OCI-LY7 (cell line): ENCODE measurements at regions of chr3 and their contacts with region 1.

Region 1: GRCh38 chr3:17195856-17196604 is 311.3 kb downstream of the PLCL2 start:
- DNase-seq: peak; percentile 86
- H3K4me3 ChIP-seq: peak overlapping the region; percentile 45
- H3K27ac ChIP-seq: peak overlapping the region; percentile 89
- H3K4me1 ChIP-seq: peaks cover 58% of the 10 kb centered on the region
- CTCF ChIP-seq: peak; percentile 81

Region 2: DNA sequence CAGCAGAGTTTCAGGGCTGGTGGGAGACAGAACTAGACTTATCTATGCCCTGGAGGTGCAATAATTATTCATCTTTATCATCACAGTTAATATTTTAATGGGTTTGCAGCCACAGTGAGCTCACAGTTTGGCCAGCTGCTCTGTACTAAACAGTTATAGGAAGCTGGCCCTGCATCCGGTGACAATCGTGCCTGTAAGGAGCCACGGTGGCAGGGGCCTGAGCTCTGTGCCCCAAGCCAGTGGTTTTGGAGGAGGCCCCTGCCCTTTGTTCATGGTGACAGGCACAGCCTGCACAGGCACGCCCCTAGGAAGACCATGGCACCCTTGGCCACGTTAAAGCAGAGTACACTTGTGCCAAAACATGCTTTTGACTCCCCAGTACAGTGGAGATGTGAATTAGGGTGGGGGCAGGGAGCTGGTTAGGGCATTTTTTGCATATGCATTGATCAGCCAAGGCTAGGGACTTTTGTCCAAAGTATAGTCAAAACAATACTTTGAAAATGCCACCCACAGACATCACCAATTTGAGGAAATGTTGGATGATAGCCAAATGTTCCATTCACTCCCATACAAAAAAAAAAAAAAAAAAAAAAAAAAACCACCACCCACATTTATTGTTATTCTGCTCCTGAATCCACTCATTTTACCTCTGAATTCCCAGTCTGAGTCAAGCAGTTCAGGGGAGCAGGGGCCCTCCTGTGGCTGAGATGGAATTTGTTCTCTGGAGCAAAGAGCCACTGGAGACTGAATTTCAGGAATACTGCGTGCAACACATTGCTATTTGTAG is 679.1 kb before region 1 on chr3:
- CTCF ChIA-PET with region 1: no interaction called
- POLR2A ChIA-PET with region 1: no interaction called
- intact Hi-C with region 1: no loop called
- DNase-seq: no peak
- H3K4me3 ChIP-seq: peak overlapping the region; percentile 92
- H3K27ac ChIP-seq: peak overlapping the region; percentile 24
- H3K4me1 ChIP-seq: peaks cover 50% of the 10 kb centered on the region
- CTCF ChIP-seq: peak; percentile 55

Region 3: GRCh38 chr3:16884084-16884747 is 311.8 kb before region 1 on chr3:
- CTCF ChIA-PET with region 1: no interaction called
- POLR2A ChIA-PET with region 1: interaction called, 4 read pairs
- intact Hi-C with region 1: loop called (anchors 1 kb)
- DNase-seq: peak; percentile 83
- H3K4me3 ChIP-seq: peak overlapping the region; percentile 76
- H3K27ac ChIP-seq: peak overlapping the region; percentile 79
- H3K4me1 ChIP-seq: peaks cover 22% of the 10 kb centered on the region
- CTCF ChIP-seq: peak; percentile 77

Region 4: DNA sequence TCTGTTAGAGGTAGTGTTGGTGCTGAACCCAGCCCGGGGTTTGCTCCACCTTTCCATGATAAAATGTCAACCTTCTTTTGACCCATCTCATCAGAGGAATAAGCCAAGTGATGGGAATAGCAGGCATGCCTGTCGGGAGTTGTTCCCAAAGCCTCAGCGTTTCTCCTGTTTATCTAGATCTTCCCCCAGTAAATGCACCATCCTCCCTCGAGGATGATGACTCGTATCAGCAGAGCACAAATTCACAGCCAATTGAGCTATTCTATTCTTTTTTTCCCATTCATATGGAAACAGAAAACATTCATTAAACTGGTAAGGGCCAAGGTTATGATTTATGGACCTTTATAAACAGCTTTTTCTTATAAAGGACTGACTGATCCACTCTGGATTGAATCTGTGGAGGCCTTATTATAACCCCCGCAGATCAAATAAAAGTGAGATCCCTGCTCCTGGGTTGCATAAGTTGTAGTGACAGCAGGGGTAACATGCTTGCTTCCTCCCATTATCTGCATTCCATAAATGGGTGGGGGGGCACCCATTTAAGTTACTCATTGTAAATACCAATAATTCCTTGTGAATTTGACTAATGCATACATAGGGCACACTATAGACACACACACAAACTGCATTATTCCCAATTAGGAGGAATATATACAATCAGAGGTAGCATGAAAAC is 104.0 kb before region 1 on chr3:
- CTCF ChIA-PET with region 1: no interaction called
- POLR2A ChIA-PET with region 1: no interaction called
- intact Hi-C with region 1: no loop called
- DNase-seq: no peak
- H3K4me3 ChIP-seq: no peak overlapping the region
- H3K27ac ChIP-seq: no peak overlapping the region
- H3K4me1 ChIP-seq: no peaks in the 10 kb centered on the region
- CTCF ChIP-seq: no peak

Region 5: DNA sequence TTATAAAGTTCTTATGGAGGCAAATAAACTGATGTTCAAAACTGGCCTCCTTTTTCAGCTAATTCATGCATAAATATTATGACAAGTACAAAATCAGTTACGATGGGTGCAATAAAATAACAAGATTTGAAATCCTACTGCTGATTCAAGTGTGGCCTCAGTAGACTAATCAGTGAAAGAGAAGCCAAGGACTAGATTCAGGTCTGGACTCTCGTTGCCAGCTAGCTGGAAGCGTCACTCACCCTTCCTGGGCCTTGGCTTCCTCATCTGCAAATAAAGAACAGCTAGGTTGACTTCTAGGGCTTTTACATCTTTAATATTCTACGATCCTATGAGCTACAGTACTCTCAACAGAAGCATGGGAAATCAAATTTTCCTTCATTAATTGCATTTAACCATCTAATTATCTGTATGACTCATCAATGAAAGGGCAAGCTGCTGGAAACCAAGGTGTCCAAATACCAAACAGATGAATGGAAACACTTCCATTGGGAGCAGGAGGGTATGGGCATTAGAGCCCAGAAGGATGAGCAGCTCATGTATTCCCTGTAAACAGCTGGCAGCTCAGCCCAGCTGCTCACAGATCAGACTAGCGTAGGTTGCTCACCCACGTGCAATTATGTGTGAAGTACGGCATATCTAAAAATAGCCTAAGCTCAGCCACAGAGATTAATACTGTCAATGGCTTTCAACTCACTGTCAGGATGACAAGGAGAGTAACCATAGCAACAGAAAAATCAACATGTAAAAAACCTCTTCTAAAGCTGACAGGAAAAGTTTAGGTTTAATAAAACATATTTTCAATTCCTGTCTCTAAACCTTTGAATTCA is 16.4 kb before region 1 on chr3:
- CTCF ChIA-PET with region 1: interaction called, 5 read pairs
- POLR2A ChIA-PET with region 1: interaction called, 23 read pairs
- intact Hi-C with region 1: no loop called
- DNase-seq: peak; percentile 62
- H3K4me3 ChIP-seq: no peak overlapping the region
- H3K27ac ChIP-seq: no peak overlapping the region
- H3K4me1 ChIP-seq: peaks cover 27% of the 10 kb centered on the region
- CTCF ChIP-seq: no peak

Region 6: GRCh38 chr3:17233398-17233800 is 37.4 kb after region 1 on chr3:
- CTCF ChIA-PET with region 1: interaction called, 3 read pairs
- POLR2A ChIA-PET with region 1: interaction called, 6 read pairs
- intact Hi-C with region 1: loop called (anchors 1 kb)
- DNase-seq: peak; percentile 83
- H3K4me3 ChIP-seq: no peak overlapping the region
- H3K27ac ChIP-seq: no peak overlapping the region
- H3K4me1 ChIP-seq: peaks cover 45% of the 10 kb centered on the region
- CTCF ChIP-seq: peak; percentile 94

Region 7: DNA sequence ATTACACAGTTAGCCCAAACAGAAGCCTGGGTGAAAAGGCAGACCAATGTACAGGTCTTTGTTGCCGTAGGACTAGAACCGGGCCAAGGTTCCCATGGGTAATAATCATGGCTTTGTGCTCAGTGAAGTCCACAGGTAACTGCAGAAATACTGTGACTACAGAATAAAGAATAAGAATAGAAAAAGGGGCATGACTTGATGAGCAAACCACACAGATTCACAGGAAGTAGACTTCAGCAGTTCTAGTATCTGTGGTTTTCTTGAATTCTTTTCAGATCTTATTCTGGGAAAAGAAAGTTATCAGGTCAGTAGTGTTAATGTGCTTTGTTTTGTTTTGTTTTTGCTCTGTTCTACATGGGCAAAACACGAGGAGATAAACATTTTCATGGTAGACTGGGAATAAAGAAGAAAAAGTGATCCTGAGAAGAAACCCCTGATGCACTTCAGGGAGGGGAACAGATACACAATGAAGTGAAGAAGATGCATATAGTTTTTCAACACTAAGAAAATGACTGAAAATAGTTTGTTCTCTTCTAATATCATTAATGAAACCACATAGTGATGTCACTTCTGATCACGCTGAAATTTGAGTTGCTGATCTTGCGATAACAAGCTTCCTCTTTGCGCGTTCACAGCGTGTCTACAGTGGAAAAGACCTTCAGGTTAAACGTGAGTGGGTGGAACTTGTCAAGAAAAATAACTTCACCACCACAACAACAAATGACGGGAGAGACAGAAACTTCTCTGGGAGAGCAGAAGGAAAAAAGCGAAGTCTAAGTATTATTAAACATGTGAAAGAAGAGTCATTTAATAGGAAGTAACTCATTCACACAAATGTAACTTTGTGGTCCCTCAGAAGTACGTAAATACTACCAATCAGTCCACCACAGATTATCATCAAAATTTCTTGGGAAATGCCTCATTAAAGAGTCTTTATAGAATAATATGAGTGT is 1544.9 kb after region 1 on chr3:
- CTCF ChIA-PET with region 1: no interaction called
- POLR2A ChIA-PET with region 1: no interaction called
- intact Hi-C with region 1: loop called (anchors 10 kb)
- DNase-seq: peak; percentile 76
- H3K4me3 ChIP-seq: peak overlapping the region; percentile 60
- H3K27ac ChIP-seq: peak overlapping the region; percentile 91
- H3K4me1 ChIP-seq: peaks cover 73% of the 10 kb centered on the region
- CTCF ChIP-seq: no peak